ENCODE measurements at regions of chr4 and their contacts with region 1.

Region 1: GRCh38 chr4:98658287-98659105 is at the start of gene TSPAN5:
- DNase-seq: peak; percentile 79
- ATAC-seq: peak; percentile 54
- H3K4me3 ChIP-seq: peak within 1 kb of the TSS; percentile 86
- H3K27ac ChIP-seq: peak within 1 kb of the TSS; percentile 99
- H3K4me1 ChIP-seq: peaks cover 61% of the 10 kb centered on the region
- H3K27me3 ChIP-seq: no peaks in the 10 kb centered on the region
- CTCF ChIP-seq: no peak
- total RNA-seq, gene TSPAN5: 41.8 and 50.3 TPM in 2 replicates

Region 2: DNA sequence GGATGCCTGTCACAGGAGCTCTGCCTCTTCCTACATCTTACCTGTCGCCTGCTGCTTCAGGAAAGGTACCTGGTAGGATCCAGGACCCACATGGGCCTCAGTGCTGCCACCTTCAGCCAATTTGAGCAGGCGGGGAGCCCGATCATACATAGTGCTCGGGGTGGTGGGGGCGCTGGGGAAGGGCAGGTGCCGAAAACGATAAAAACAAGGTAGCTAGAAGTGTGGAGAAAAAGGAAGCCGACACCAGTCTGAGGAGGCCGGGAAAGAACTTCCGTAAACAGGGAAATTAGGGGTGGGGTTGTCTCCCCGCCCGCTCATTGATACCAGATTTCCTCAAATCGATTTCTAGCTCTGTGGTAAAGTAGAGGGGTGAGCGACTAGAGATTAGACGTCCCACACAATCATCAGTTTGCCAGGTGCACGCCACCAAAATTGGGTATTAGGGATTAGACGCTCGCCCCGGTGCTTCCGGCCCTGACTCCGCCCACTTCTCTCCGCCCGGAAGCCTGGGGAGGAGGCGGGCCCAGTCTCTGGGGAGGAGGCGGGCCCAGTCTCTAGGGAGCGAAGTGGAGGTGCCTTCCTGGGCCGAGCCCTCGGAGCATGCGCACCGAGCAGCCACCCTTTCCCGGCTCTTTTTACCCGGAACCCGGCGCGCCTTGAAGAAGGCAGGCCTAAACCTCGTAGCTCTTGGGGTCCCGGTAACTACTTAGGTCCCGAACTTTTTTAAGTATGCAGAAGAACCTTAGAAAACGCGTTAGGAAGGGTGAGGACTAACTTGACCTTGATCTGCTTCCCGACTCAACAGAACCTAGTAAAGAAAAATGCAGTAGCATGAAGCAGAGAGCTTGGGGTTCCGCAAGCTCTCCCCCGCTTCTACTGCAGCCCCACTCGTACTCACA is 515.2 kb before region 1 on chr4 and contains the start of gene STPG2:
- CTCF ChIA-PET with region 1: no interaction called
- POLR2A ChIA-PET with region 1: no interaction called
- intact Hi-C with region 1: loop called (anchors 10 kb)
- DNase-seq: peak; percentile 86
- ATAC-seq: peak; percentile 97
- H3K4me3 ChIP-seq: peak within 1 kb of the TSS; percentile 71
- H3K27ac ChIP-seq: peak within 1 kb of the TSS; percentile 81
- H3K4me1 ChIP-seq: peaks cover 17% of the 10 kb centered on the region
- H3K27me3 ChIP-seq: no peaks in the 10 kb centered on the region
- CTCF ChIP-seq: peak; percentile 69
- total RNA-seq, gene STPG2: 0.40 TPM in 1 of 2 replicates, not detected in the other

Region 3: GRCh38 chr4:98467627-98468072 is 190.8 kb before region 1 on chr4:
- CTCF ChIA-PET with region 1: interaction called, 6 read pairs
- POLR2A ChIA-PET with region 1: interaction called, 8 read pairs
- intact Hi-C with region 1: loop called (anchors 5 kb)
- DNase-seq: peak; percentile 90
- ATAC-seq: peak; percentile 86
- H3K4me3 ChIP-seq: peak overlapping the region; percentile 64
- H3K27ac ChIP-seq: peak overlapping the region; percentile 73
- H3K4me1 ChIP-seq: peaks cover 14% of the 10 kb centered on the region
- H3K27me3 ChIP-seq: no peaks in the 10 kb centered on the region
- CTCF ChIP-seq: peak; percentile 82

Region 4: GRCh38 chr4:98573791-98574190 is 84.7 kb before region 1 on chr4:
- CTCF ChIA-PET with region 1: no interaction called
- POLR2A ChIA-PET with region 1: no interaction called
- intact Hi-C with region 1: loop called (anchors 5 kb)
- DNase-seq: peak; percentile 93
- ATAC-seq: peak; percentile 37
- H3K4me3 ChIP-seq: no peak overlapping the region
- H3K27ac ChIP-seq: peak overlapping the region; percentile 100
- H3K4me1 ChIP-seq: peaks cover 53% of the 10 kb centered on the region
- H3K27me3 ChIP-seq: no peaks in the 10 kb centered on the region
- CTCF ChIP-seq: no peak

Region 5: GRCh38 chr4:98710831-98711230 is 52.3 kb after region 1 on chr4:
- CTCF ChIA-PET with region 1: no interaction called
- POLR2A ChIA-PET with region 1: no interaction called
- intact Hi-C with region 1: loop called (anchors 2 kb)
- DNase-seq: peak; percentile 8
- ATAC-seq: peak; percentile 35; the same call in 1 of the 2 replicates
- H3K4me3 ChIP-seq: no peak overlapping the region
- H3K27ac ChIP-seq: no peak overlapping the region
- H3K4me1 ChIP-seq: no peaks in the 10 kb centered on the region
- H3K27me3 ChIP-seq: no peaks in the 10 kb centered on the region
- CTCF ChIP-seq: no peak

Region 6: GRCh38 chr4:98928505-98929340 is 270.2 kb after region 1 on chr4 and contains the start of gene EIF4E:
- CTCF ChIA-PET with region 1: no interaction called
- POLR2A ChIA-PET with region 1: no interaction called
- intact Hi-C with region 1: loop called (anchors 5 kb)
- DNase-seq: peak; percentile 96
- ATAC-seq: peak; percentile 62
- H3K4me3 ChIP-seq: peak within 1 kb of the TSS; percentile 92
- H3K27ac ChIP-seq: peak within 1 kb of the TSS; percentile 98
- H3K4me1 ChIP-seq: peaks cover 17% of the 10 kb centered on the region
- H3K27me3 ChIP-seq: no peaks in the 10 kb centered on the region
- CTCF ChIP-seq: no peak
- total RNA-seq, gene EIF4E: 110 and 134 TPM in 2 replicates